Posterior vena cava (tissue), 2 donors: ENCODE measurements at regions of chr6 and their contacts with region 1.

Region 1: DNA sequence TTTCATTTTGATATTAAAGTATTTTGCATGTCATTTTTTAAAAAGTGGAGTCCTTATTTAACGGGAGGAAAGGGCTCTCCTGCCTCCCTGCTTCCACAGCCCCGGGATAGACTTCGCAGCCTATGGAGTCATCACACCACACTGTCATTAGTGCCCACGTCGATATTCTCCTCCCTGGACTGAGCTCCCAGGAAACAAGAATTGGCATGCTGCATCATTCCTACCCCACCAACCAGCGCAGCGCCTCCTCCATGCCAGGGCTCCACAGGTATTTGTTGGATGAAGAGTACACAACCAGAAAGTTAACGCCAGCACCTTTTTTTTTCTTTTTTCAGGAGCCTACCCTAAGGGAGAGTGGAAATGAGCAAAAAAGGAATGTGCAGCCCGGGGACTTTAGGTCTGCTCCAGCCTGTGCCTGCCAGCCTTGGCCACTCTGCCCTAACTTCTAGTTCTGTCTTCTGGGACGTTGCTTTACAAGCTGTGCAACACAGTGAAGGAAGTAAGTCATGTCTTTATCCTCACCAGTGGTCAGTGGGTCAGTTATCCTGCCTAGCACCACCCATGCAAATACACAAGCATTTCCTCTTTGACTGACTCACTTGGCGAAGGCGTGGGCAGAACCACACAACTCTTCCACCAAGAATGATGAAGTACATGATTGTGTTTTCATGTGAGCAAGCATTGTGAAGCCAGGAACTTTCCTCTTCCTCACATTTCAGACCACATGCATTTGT is 180.7 kb upstream of the UST start:
- DNase-seq: no peak

Region 2: DNA sequence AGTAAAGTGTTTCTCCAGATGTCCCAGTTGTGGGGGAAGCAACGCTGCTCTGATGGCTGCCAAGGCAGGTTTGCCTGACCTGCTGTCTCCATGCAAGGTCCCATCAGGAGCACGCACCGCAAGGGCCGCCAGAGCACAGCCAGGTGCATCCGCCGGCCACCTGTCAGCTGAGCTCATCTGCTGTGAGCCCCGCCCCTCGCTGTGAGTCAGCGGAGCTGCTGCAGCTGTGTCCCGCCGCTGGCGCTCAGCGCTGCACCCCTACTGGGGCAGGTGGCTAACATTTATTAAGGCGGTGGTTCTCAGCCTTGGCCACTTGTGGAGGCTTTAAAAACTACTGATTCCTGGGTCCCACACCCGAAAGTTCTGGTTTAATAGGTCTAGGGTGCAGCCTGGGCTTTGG is 406.4 kb after region 1 on chr6:
- intact Hi-C with region 1: no loop called
- DNase-seq: no peak

Region 3: GRCh38 chr6:149761438-149761837 is 1195.3 kb after region 1 on chr6:
- intact Hi-C with region 1: loop called in 1 of 2 experiments (anchors 5 kb)
- DNase-seq: no peak